Naive thymus-derived CD8-positive, alpha-beta T cell (primary cell): ENCODE measurements at regions of chr1 and their contacts with region 1.

Region 1: DNA sequence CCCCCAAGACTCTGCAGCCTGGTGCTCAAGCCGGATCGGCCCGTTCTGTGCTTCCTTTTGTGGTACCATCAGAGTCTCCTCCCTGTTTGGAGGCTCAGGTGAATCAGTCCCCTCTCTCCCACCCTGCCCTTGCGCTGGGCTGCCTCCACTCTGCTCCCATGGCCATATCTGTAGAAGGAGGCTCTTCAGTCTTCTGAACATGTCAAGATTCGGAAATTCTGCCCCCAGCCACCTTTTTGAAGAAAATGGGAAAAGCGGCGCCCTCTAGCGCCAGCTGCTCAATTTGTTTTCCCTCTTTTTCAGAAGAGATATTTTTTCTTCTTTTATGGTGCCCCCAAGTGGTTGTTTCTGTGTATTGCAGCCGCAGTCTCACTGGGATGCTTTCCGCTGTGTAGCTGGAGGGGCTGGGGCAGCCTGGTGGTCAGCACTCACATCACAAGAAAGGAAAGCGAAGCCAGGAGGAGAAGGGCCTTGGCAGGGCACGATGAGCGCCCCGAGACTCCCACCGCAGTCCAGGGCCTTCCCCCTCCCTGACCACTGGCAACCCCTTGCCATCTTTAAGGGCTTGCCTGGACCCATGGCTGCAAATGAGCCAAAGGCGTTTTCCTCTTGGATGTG is 58.4 kb upstream of the CACNA1E start:
- DNase-seq: peak; percentile 64 to 87 (median 78)
- ATAC-seq: peak; percentile 72 to 73
- H3K4me3 Mint-ChIP-seq: peak overlapping the region; percentile 67 to 89 (median 78)
- H3K27ac Mint-ChIP-seq: peak overlapping the region in 9 of 10 donors; percentile 34 to 91 (median 70)
- H3K4me1 Mint-ChIP-seq: peaks cover 4 to 13% (median 12%) of the 10 kb centered on the region in 4 donors
- H3K27me3 Mint-ChIP-seq: peaks cover 5 to 41% (median 23%) of the 10 kb centered on the region in 5 donors

Region 2: DNA sequence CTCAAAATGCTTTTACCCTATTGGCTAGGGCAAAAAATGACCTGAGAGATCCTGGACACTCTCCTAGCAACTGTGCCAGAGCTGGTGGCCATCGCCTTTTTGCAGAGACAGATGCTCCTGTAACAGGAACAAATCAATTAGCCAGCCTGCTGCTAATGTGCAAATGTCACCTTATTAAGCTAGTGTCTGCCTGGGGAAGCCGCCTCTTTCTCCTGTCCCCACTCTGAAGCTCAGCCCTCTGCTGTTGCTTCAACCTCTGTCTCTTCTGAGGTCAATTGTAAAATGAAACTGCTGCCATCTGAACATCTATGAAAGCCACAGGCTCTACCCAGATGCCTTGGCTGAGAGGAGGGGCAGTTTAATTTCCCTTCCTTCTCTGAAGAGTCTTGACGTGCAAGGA is 27.1 kb before region 1 on chr1:
- POLR2A ChIA-PET with region 1: interaction called, 10 read pairs
- DNase-seq: peak in 6 of 10 donors; percentile 5 to 63 (median 47)
- ATAC-seq: peak; percentile 36 to 48
- H3K4me3 Mint-ChIP-seq: peak overlapping the region in 8 of 10 donors; percentile 47 to 80 (median 72)
- H3K27ac Mint-ChIP-seq: peak overlapping the region in 2 of 10 donors; percentile 99
- H3K4me1 Mint-ChIP-seq: peaks cover 25 to 48% (median 41%) of the 10 kb centered on the region in 4 donors
- H3K27me3 Mint-ChIP-seq: no peaks in the 10 kb centered on the region

Region 3: DNA sequence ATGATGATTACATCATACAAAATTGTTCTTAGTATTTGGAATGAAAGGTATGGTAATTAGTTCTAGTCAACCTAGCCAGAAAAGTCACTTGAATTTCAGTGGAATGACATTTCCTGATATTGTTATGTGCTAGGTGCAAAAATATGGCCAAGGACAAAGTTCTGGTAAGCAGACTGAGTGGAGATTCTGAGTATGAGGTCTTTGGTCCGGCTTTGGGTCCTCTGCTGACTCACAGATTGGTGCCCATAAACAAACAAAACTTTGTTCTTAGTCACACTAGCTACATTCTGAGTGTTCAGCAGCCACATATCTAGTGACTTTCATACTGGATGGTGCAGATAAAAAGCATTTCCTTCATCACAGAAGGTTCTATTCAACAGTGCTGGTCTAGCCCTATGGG is 430.5 kb after region 1 on chr1:
- POLR2A ChIA-PET with region 1: no interaction called
- DNase-seq: no peak
- ATAC-seq: no peak
- H3K4me3 Mint-ChIP-seq: no peak overlapping the region
- H3K27ac Mint-ChIP-seq: no peak overlapping the region
- H3K4me1 Mint-ChIP-seq: no peaks in the 10 kb centered on the region
- H3K27me3 Mint-ChIP-seq: peaks cover 4 to 28% (median 15%) of the 10 kb centered on the region in 5 donors